PC-3 (cell line): ENCODE measurements at regions of chr1 and their contacts with region 1.

Region 1: DNA sequence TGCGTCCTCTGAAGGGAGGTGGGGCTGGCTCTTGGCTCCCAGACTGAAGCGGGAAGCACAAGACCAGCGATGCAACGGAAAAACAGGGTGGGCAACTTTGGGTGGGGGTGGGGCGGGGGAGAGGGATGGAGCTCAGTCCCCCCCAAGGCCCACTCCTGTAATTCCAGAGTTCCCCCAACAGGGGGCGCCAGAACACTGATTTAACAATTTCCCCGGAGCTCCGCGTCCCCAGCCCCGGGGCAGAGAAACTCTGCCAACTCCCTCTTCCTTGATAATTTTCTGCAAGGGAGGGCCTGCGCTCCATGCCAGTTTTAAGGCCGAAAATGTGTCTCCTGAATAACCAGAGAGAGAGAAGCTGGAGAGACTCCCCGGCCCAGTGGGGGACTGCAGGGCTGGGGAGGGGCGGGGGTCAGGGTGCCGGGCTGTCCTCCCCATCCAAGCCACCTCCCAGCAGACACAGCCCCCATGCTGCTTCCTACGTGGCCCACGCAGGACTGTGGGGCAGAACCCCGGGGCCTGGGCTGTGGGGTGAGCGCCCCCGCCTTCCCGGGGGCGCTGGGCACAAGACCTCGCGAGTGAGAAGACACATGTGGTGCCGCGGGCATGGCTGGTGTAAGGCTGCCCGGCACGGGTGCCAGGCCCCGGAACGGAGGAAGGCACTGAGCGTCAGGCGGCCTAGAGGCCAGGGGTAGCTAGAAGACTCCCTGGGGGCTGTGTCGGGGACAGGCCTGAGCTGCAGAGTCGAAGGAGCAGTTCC is 51.4 kb downstream of the KIF21B start:
- DNase-seq: peak; percentile 93
- ATAC-seq: peak; percentile 10; the same call in 1 of the 2 replicates
- H3K4me3 ChIP-seq: peak overlapping the region; percentile 26; the same call in 1 of the 2 replicates
- H3K27ac ChIP-seq: no peak overlapping the region
- H3K4me1 ChIP-seq: peaks cover 15% of the 10 kb centered on the region
- H3K27me3 ChIP-seq: no peaks in the 10 kb centered on the region
- CTCF ChIP-seq: peak; percentile 98

Region 2: DNA sequence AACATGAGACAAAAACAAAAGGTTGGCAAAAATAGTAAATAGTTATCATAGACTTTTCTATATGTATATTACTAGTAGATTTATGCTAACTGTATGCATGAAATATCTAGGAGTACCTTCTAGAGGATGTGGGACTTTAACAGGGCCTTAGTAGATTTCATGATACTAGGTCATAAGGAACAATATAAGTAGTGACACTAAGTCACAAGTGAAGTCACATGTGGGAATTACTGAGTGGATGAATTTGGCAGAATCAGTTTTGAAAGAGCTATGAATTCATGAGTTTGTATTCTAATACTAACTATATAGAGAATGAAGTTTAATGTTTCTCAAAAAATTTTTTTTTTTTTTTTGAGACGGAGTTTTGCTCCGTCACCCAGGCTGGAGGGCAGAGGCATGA is 152.4 kb before region 1 on chr1:
- CTCF ChIA-PET with region 1: no interaction called
- POLR2A ChIA-PET with region 1: no interaction called
- intact Hi-C with region 1: no loop called
- DNase-seq: no peak
- ATAC-seq: no peak
- H3K4me3 ChIP-seq: no peak overlapping the region
- H3K27ac ChIP-seq: no peak overlapping the region
- H3K4me1 ChIP-seq: no peaks in the 10 kb centered on the region
- H3K27me3 ChIP-seq: no peaks in the 10 kb centered on the region
- CTCF ChIP-seq: no peak

Region 3: DNA sequence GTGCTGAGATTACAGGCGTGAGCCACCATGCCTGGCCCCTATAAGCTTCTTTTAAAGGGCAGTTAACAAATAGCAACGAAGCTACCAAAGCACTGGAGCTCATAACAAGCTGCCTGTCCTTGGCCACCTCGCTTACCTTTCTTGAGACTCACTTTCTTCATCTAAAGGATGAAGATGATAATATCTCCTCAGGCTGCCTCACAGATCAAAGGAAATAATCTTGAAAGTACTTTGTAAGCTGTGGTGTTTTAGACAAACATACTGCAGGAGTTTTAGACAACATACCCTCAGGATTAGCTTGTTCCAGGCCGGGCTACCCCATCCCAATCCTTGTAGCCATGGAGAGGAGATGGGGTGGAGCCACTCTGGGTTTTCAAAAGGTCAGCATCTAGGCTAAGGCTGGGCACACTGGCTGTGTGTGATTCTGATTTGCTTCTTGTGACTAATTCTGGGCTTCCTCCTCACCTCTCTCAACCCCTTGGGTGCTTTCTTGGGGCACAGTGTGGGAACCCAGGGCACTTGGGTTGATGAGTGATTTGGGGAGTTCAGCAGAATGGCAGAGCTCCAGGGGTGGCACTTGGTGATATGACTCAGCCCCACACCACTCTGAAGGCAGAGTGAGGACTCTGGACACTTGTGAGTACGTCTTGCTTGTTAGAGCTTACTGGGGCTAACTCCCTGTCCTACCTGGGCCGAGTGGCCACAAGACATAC is 94.1 kb before region 1 on chr1:
- CTCF ChIA-PET with region 1: interaction called, 15 read pairs
- POLR2A ChIA-PET with region 1: no interaction called
- intact Hi-C with region 1: no loop called
- DNase-seq: no peak
- ATAC-seq: 0 out of 2 replicates have a peak, but pooled peaks have one; percentile 10
- H3K4me3 ChIP-seq: no peak overlapping the region
- H3K27ac ChIP-seq: no peak overlapping the region
- H3K4me1 ChIP-seq: no peaks in the 10 kb centered on the region
- H3K27me3 ChIP-seq: peaks cover 62% of the 10 kb centered on the region
- CTCF ChIP-seq: no peak

Region 4: GRCh38 chr1:200896531-200897196 is 75.5 kb before region 1 on chr1:
- CTCF ChIA-PET with region 1: interaction called, 14 read pairs
- POLR2A ChIA-PET with region 1: no interaction called
- intact Hi-C with region 1: loop called (anchors 2 kb)
- DNase-seq: peak; percentile 100
- ATAC-seq: peak; percentile 62
- H3K4me3 ChIP-seq: peak overlapping the region; percentile 67
- H3K27ac ChIP-seq: peak overlapping the region; percentile 74
- H3K4me1 ChIP-seq: peaks cover 66% of the 10 kb centered on the region
- H3K27me3 ChIP-seq: no peaks in the 10 kb centered on the region
- CTCF ChIP-seq: no peak

Region 5: GRCh38 chr1:201042779-201043461 is 70.8 kb after region 1 on chr1:
- CTCF ChIA-PET with region 1: interaction called, 22 read pairs
- POLR2A ChIA-PET with region 1: no interaction called
- intact Hi-C with region 1: loop called (anchors 1 kb)
- DNase-seq: peak; percentile 92
- ATAC-seq: peak; percentile 94
- H3K4me3 ChIP-seq: no peak overlapping the region
- H3K27ac ChIP-seq: no peak overlapping the region
- H3K4me1 ChIP-seq: no peaks in the 10 kb centered on the region
- H3K27me3 ChIP-seq: peaks cover 15% of the 10 kb centered on the region
- CTCF ChIP-seq: peak; percentile 100

Region 6: GRCh38 chr1:201094832-201095231 is 122.7 kb after region 1 on chr1:
- CTCF ChIA-PET with region 1: no interaction called
- POLR2A ChIA-PET with region 1: no interaction called
- intact Hi-C with region 1: no loop called
- DNase-seq: no peak
- ATAC-seq: no peak
- H3K4me3 ChIP-seq: no peak overlapping the region
- H3K27ac ChIP-seq: no peak overlapping the region
- H3K4me1 ChIP-seq: no peaks in the 10 kb centered on the region
- H3K27me3 ChIP-seq: peaks cover 75% of the 10 kb centered on the region
- CTCF ChIP-seq: no peak

Region 7: DNA sequence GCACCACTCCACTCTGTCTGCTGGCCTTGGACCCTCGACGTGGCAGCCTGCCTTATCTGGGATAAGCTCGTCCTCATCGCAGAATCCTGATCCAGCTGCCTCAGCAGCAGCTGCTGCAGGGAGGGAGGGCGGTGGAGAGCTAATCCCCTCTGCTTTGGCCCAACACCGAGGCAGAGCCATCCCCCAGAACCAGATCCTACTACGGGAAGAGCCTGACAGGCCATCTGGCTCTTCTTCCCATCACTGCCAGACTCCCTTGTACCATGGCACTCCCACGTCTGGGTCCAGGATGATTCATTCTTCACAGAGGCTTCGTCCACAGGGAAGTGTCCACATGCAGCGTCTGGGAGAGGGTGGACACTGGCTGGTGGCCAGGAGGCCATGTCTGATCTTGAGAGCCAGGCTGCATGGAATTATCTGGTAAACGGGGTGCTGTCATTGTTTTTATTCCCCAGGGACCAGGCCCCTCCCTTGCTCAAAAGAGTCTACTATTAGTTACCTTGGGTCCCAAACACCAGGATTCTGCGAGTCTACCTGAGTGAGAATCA is 296.5 kb after region 1 on chr1:
- CTCF ChIA-PET with region 1: interaction called, 10 read pairs
- POLR2A ChIA-PET with region 1: no interaction called
- intact Hi-C with region 1: no loop called
- DNase-seq: peak; percentile 89
- ATAC-seq: peak; percentile 34
- H3K4me3 ChIP-seq: no peak overlapping the region
- H3K27ac ChIP-seq: peak overlapping the region; percentile 83
- H3K4me1 ChIP-seq: peaks cover 44% of the 10 kb centered on the region
- H3K27me3 ChIP-seq: no peaks in the 10 kb centered on the region
- CTCF ChIP-seq: no peak